Esophagus muscularis mucosa (tissue), 4 donors: ENCODE measurements at regions of chr15 and their contacts with region 1.

Region 1: DNA sequence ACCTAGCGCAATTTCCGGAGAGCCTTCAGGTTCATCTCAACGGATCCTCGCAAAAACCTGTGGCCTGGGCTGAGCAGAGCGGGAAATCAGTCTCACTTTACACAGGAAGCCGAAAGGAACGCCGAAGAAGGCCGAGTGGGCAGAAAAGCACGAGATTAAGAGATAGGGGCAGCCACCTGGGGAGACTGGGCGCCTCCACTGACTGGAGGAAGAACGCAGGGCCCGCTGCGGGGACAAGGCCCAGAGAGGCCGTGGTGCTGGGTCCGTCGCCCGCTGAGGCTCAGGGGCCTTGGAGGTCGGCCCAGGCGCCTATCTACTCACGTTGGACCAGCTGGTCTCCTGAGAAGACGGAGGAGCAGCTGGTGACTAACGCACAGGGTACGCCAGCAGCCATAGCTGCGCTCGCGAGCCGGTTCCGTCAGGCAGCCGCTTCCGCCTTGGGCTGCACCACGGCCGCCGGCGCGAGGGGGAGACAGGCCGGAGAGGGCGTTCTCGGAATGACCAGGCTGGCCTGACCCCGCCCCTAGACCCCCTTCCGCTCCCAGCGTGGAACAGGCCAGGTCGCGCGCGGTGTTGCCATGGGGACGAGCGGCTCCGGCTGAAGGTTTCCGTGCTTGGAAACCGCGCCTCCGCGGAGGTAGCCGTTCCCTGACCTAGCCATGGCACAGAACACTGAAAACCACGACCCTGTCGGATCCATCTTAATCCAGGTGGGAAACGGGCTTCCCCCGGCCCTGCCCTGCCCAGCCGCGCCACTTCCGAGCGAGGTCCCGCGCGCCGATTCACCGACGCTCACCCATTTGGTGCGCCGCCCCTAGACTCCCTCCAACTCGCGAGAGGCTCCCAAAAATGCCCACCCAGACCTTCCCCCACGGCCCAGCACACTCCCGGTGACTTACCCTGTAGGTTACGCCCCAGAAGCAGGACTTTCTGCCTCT is at the starts of genes AAGAB and IQCH:
- DNase-seq: peak; percentile 99
- H3K4me3 ChIP-seq: peak within 1 kb of the TSS; percentile 81 to 88 (median 86)
- H3K27ac ChIP-seq: peak within 1 kb of the TSS; percentile 86 to 94 (median 90)
- H3K4me1 ChIP-seq: peaks cover 9 to 21% (median 19%) of the 10 kb centered on the region in 4 donors
- H3K27me3 ChIP-seq: no peaks in the 10 kb centered on the region
- CTCF ChIP-seq: peak in 1 of 3 experiments; percentile 27
- EP300 ChIP-seq: no peak
- POLR2A ChIP-seq: peak; percentile 64
- total RNA-seq, gene AAGAB: 21.3 to 37.8 (median 29.0) TPM
- total RNA-seq, gene IQCH: 0.58 to 2.4 (median 1.2) TPM

Region 2: GRCh38 chr15:67196672-67197363 is 57.7 kb before region 1 on chr15:
- intact Hi-C with region 1: loop called (anchors 5 kb)
- DNase-seq: peak; percentile 77
- H3K4me3 ChIP-seq: no peak overlapping the region
- H3K27ac ChIP-seq: peak overlapping the region in 3 of 4 donors; percentile 19 to 33 (median 20)
- H3K4me1 ChIP-seq: peaks cover 41 to 50% (median 46%) of the 10 kb centered on the region in 4 donors
- H3K27me3 ChIP-seq: no peaks in the 10 kb centered on the region
- CTCF ChIP-seq: no peak
- EP300 ChIP-seq: no peak
- POLR2A ChIP-seq: no peak

Region 3: DNA sequence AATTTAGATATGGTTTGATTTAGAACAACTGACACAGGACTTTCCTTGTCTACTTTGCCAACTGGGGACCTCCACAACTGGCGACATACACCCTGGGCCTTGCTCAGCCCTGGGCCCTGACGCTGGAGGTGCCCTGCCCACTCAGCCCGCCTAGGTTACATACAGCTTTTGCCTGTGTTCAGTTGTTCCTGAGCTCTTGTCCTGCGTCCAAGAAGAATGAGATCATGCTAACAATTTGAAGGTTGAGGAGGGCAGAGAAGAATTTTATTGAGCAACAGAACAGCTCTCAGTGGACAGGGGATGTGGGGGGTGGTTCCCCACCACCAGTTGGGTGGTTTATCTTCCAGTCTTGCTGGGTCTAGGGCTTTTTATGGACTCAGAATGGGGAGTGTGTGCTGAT is 68.0 kb after region 1 on chr15:
- intact Hi-C with region 1: no loop called
- DNase-seq: no peak
- H3K4me3 ChIP-seq: no peak overlapping the region
- H3K27ac ChIP-seq: no peak overlapping the region
- H3K4me1 ChIP-seq: no peaks in the 10 kb centered on the region
- H3K27me3 ChIP-seq: no peaks in the 10 kb centered on the region
- CTCF ChIP-seq: no peak
- EP300 ChIP-seq: no peak
- POLR2A ChIP-seq: no peak